B cell (primary cell): ENCODE measurements at regions of chr4 and their contacts with region 1.

Region 1: GRCh38 chr4:87171944-87172343 is 48.5 kb downstream of the KLHL8 start:
- DNase-seq: no peak
- ATAC-seq: no peak
- H3K4me3 ChIP-seq: no peak overlapping the region
- H3K4me3 Mint-ChIP-seq: no peak overlapping the region
- H3K27ac ChIP-seq: no peak overlapping the region
- H3K27ac Mint-ChIP-seq: no peak overlapping the region
- H3K4me1 ChIP-seq: no peaks in the 10 kb centered on the region
- H3K4me1 Mint-ChIP-seq: no peaks in the 10 kb centered on the region
- H3K27me3 ChIP-seq: no peaks in the 10 kb centered on the region
- H3K27me3 Mint-ChIP-seq: no peaks in the 10 kb centered on the region
- CTCF ChIP-seq: no peak

Region 2: DNA sequence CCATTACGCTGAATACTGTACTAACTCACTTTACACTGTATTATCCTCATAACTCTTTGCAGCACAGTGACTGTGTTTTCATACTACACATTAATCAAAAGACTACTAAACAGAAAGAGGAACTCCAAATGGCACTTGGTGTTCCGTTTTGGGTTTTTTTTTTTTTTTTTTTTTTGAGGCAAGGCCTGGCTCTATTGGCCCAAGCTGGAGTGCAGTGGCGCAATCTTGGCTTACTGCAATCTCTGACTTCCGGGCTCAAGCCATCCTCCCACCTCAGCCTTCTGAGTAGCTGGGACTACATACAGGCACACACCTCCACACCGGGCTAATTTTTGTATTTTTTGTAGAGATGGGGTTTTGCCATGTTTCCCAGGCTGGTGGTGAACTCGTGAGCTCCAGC is 37.8 kb after region 1 on chr4:
- CTCF ChIA-PET with region 1: no interaction called
- POLR2A ChIA-PET with region 1: no interaction called
- intact Hi-C with region 1: loop called (anchors 5 kb)
- DNase-seq: peak; percentile 75
- ATAC-seq: peak; percentile 93
- H3K4me3 ChIP-seq: peak overlapping the region in 4 of 5 experiments; percentile 34 to 75 (median 48)
- H3K4me3 Mint-ChIP-seq: peak overlapping the region; percentile 85
- H3K27ac ChIP-seq: peak overlapping the region; percentile 3 to 56
- H3K27ac Mint-ChIP-seq: peak overlapping the region; percentile 83
- H3K4me1 ChIP-seq: peaks cover 7 to 11% of the 10 kb centered on the region in 2 donors
- H3K4me1 Mint-ChIP-seq: peaks cover 16% of the 10 kb centered on the region
- H3K27me3 ChIP-seq: no peaks in the 10 kb centered on the region
- H3K27me3 Mint-ChIP-seq: no peaks in the 10 kb centered on the region
- CTCF ChIP-seq: no peak

Region 3: GRCh38 chr4:87220094-87220822 is 48.3 kb after region 1 on chr4 and contains the start of gene KLHL8:
- CTCF ChIA-PET with region 1: no interaction called
- POLR2A ChIA-PET with region 1: no interaction called
- intact Hi-C with region 1: no loop called
- DNase-seq: peak; percentile 92
- ATAC-seq: peak; percentile 93
- H3K4me3 ChIP-seq: peak within 1 kb of the TSS; percentile 76 to 100 (median 93)
- H3K4me3 Mint-ChIP-seq: peak within 1 kb of the TSS; percentile 98
- H3K27ac ChIP-seq: peak within 1 kb of the TSS; percentile 80 to 85
- H3K27ac Mint-ChIP-seq: peak within 1 kb of the TSS; percentile 96
- H3K4me1 ChIP-seq: peaks cover 7% of the 10 kb centered on the region in 2 donors
- H3K4me1 Mint-ChIP-seq: peaks cover 16% of the 10 kb centered on the region
- H3K27me3 ChIP-seq: no peaks in the 10 kb centered on the region
- H3K27me3 Mint-ChIP-seq: no peaks in the 10 kb centered on the region
- CTCF ChIP-seq: no peak
- total RNA-seq, gene KLHL8: 12.4 and 14.3 TPM in 2 replicates